PC-9 (cell line): ENCODE measurements at regions of chr12 and their contacts with region 1.

Region 1: GRCh38 chr12:40152783-40153383 is 47.0 kb upstream of the SLC2A13 start:
- DNase-seq: peak; percentile 29 to 38
- H3K4me3 ChIP-seq: no peak overlapping the region
- H3K27ac ChIP-seq: no peak overlapping the region
- H3K4me1 ChIP-seq: no peaks in the 10 kb centered on the region
- H3K27me3 ChIP-seq: no peaks in the 10 kb centered on the region
- CTCF ChIP-seq: peak; percentile 86

Region 2: GRCh38 chr12:39764944-39765560 is 387.8 kb before region 1 on chr12:
- CTCF ChIA-PET with region 1: no interaction called
- POLR2A ChIA-PET with region 1: no interaction called
- intact Hi-C with region 1: loop called (anchors 1 kb)
- DNase-seq: no peak
- H3K4me3 ChIP-seq: no peak overlapping the region
- H3K27ac ChIP-seq: no peak overlapping the region
- H3K4me1 ChIP-seq: no peaks in the 10 kb centered on the region
- H3K27me3 ChIP-seq: no peaks in the 10 kb centered on the region
- CTCF ChIP-seq: peak; percentile 90

Region 3: DNA sequence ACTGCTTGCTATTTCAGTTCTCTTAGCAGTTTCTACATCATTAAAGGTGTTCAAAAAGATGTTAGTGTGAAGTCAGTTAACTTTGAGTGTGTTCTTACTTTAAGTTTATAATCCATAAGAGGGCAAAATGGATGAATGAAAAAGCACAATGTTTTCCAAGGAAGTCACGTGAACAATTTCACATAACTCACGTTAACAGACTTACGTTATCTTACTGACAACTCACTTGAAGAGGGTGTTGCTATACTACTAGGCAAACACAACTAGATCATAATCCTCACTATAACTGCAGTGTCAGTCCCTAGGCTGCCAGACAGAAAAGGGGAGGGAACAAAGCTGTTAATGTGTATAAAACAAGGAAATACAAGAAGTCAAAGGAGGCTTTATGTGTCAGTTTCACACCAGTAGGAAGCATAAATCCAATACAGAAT is 53.4 kb before region 1 on chr12:
- CTCF ChIA-PET with region 1: no interaction called
- POLR2A ChIA-PET with region 1: no interaction called
- intact Hi-C with region 1: no loop called
- DNase-seq: no peak
- H3K4me3 ChIP-seq: no peak overlapping the region
- H3K27ac ChIP-seq: no peak overlapping the region
- H3K4me1 ChIP-seq: peaks cover 3% of the 10 kb centered on the region; the same call in 1 of the 2 replicates
- H3K27me3 ChIP-seq: no peaks in the 10 kb centered on the region
- CTCF ChIP-seq: no peak

Region 4: GRCh38 chr12:40312982-40313576 is 160.2 kb after region 1 on chr12:
- CTCF ChIA-PET with region 1: interaction called, 3 read pairs
- POLR2A ChIA-PET with region 1: no interaction called
- intact Hi-C with region 1: loop called (anchors 2 kb)
- DNase-seq: no peak
- H3K4me3 ChIP-seq: no peak overlapping the region
- H3K27ac ChIP-seq: no peak overlapping the region
- H3K4me1 ChIP-seq: no peaks in the 10 kb centered on the region
- H3K27me3 ChIP-seq: no peaks in the 10 kb centered on the region
- CTCF ChIP-seq: peak; percentile 72